Gastrocnemius medialis (tissue), 4 donors: ENCODE measurements at regions of chr1 and their contacts with region 1.

Region 1: DNA sequence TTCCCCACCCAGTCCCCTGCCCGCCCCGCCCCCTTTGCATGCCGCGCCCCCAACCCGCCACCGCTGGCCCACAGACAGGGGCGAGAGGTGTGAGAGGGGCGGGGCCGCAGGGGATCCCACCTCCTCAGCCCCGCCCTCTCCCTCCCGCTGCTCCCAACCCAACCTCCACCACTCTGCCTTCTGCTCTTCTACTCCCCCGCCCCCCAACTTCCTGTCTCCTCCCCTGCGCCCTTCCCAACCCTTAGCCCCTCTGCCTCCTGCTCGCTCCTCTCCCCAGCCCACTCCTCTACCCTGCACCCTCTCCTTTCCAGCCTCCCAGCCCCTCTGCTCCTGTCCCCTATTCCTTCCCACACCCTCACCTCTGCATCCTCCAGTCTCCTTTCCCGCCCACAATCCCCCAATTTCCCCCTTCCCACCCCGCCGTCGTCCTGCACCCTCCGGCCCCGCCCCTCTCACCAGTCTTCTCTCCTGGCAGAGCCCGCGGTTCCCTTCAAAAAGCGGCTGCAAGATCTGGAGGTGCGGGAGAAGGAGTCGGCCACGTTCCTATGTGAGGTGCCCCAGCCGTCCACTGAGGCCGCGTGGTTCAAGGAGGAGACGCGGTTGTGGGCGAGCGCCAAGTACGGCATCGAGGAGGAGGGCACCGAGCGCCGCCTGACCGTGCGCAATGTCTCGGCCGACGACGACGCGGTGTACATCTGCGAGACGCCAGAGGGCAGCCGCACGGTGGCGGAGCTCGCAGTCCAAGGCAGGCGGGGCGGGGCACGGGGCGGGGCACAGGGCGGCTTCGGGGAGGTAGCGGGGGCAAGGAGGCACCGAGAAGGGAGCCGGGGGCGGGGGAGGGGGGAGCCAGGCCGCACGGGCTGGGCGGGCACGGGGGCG is 5.4 kb downstream of the OBSCN start:
- DNase-seq: peak; percentile 76 to 91
- ATAC-seq: peak; percentile 10 to 14
- H3K4me3 ChIP-seq: peak overlapping the region; percentile 39 to 57 (median 52)
- H3K27ac ChIP-seq: peak overlapping the region; percentile 97 to 100 (median 100)
- H3K4me1 ChIP-seq: peaks cover 23 to 63% of the 10 kb centered on the region in 2 donors
- H3K27me3 ChIP-seq: no peaks in the 10 kb centered on the region
- CTCF ChIP-seq: peak in 4 of 5 experiments; percentile 29 to 63 (median 44)
- POLR2A ChIP-seq: peak; percentile 6 to 15

Region 2: DNA sequence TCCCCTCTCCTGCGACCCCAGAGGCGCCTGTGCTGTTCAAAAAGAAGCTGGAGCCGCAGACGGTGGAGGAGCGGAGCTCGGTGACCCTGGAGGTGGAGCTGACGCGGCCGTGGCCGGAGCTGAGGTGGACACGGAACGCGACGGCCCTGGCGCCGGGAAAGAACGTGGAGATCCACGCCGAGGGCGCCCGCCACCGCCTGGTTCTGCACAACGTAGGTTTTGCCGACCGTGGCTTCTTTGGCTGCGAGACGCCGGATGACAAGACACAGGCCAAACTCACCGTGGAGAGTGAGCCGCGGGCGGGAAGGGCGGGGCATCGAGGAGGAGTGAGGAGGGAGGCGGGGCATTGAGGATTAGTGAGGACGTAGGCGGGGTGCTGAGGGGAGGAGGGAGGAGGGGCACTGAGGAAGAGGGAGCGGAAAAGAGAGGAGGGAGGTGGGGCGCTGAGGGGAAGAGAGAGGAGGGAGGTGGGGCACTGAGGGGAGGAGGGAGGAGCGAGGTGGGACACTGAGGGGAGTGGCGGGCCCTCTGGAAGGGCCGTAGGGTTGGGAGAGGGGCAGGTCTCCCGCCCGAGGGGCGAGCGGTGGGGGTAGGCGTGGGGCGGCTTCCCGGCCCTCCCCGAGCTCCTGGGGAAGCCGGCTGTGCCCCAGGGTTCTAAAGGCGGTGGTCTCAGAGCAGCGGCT is 62.7 kb after region 1 on chr1:
- in situ Hi-C with region 1: no loop called
- intact Hi-C with region 1: loop called (anchors 5 kb)
- DNase-seq: peak; percentile 74 to 83
- ATAC-seq: peak; percentile 35 to 57
- H3K4me3 ChIP-seq: peak overlapping the region; percentile 50 to 59 (median 50)
- H3K27ac ChIP-seq: peak overlapping the region; percentile 79 to 89 (median 79)
- H3K4me1 ChIP-seq: peaks cover 0 to 16% of the 10 kb centered on the region in 2 donors
- H3K27me3 ChIP-seq: no peaks in the 10 kb centered on the region
- CTCF ChIP-seq: no peak
- POLR2A ChIP-seq: no peak